Posterior cingulate gyrus (tissue), 11 donors: ENCODE measurements at regions of chr19 and their contacts with region 1.

Region 1: GRCh38 chr19:8252922-8253589 is 43.9 kb downstream of the CERS4 start:
- DNase-seq: peak; percentile 71 to 98 (median 88)

Region 2: GRCh38 chr19:7943444-7944176 is 309.4 kb before region 1 on chr19 and contains the start of gene TIMM44:
- intact Hi-C with region 1: loop called (anchors 5 kb)
- DNase-seq: peak; percentile 98 to 100 (median 100)

Region 3: DNA sequence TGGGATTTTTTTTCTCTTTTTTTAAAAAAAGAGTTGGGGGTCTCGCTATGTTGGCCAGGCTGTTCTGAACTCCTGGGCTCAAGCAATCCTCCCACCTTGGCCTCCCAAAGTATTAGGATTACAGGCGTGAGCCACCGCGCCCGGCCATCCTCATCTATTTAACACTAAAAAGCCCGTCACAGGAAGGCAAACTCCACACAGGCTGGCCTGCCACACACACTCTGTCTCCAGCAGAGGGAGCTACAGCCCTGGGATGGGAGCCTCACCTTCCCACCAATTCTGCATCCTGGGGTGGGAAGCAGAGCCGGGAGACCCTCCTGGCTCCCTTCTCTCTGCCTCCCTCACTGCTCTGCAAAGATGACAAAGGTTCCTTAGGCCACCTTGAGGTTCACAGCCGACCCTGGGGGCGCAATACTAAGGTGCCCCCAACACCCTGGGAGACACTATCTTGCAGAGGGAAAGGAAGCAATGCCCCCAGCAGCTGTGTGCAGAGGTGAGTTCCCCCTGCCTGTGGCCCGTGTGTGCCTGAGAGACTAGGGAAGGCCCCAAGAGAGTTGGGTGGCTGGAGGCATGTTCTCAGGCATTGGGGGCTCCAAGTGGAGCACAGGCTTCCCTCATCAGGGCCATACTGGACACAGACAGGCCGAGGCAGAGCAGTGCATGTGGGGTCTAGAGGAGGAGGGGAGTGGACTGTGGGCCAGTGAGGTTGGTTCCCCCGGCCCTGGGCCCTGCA is 282.2 kb before region 1 on chr19:
- intact Hi-C with region 1: loop called (anchors 10 kb)
- DNase-seq: peak in 8 of 10 donors; percentile 30 to 93 (median 50)

Region 4: GRCh38 chr19:8158411-8159074 is 94.5 kb before region 1 on chr19:
- intact Hi-C with region 1: loop called (anchors 1 kb)
- DNase-seq: peak in 3 of 10 donors; percentile 31 to 57 (median 37)

Region 5: DNA sequence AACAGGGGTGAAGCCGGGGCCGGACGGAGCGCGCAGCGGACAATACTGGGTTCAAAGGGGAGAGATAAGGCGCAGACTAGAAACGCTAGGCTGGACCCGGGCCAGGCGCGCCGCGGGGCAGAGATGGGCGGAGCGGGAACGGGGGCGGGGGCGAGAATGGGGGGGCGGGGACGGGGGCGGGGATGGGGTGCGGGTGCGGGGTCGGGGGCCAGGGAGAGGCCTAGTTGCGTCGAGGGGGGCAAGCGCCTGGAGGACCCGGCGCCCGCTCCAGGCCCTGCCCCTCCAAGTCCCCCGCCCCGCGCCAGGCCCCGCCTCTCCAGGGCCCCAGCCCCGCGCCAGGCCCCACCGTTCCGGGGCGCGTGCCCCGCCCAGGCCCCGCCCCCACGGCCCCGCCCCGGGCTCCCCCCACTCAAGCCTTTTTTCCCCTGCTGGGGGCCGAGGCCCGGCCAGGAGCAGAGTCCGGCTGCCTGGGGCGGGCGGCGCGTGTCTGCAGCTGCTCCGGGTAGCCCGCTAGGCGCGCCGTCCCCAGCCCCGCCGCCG is 44.1 kb before region 1 on chr19 and contains the start of gene CERS4:
- intact Hi-C with region 1: loop called (anchors 2 kb)
- DNase-seq: peak; percentile 79 to 98 (median 84)